ENCODE measurements at regions of chr7 and their contacts with region 1.

Region 1: DNA sequence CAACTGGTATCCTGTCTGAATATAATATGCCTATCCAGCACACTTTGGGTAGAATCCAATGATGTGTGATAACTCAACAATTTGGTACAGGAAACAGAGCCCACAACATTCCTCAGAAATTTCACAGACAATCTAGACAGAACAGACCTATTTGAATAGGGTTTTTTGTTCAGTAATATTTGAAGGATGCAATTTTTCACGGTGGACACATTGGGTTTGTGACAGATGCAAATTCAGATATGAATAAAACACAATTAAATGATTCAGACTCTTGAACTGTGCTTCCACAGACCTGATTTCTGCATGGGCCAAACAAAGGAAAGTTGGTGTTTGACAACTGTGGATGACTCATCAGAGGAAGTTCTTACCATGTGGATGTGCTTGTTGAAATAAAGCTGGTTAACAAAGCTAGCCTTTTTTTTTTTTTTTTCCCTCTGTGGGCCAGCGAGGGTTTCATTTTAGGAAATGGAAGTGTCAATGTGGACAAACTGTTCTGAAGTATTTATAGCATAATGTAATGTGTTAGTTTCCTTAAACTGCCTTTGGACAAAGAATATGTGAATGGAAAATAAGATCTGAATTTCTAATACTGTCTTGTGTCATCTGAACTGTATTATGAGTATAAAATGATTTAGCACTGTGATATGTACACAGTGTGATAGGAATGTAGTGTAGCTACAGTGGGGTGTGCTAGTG is 43.2 kb upstream of the FAM133B start:
- DNase-seq: peak in 6 of 7 donors; percentile 39 to 70 (median 58)
- H3K4me3 ChIP-seq: no peak overlapping the region
- H3K27ac ChIP-seq: peak overlapping the region in 4 of 5 donors; percentile 25 to 78 (median 58)
- H3K4me1 ChIP-seq: peaks cover 11 to 46% of the 10 kb centered on the region in 2 donors
- H3K27me3 ChIP-seq: no peaks in the 10 kb centered on the region
- CTCF ChIP-seq: peak in 1 of 6 experiments; percentile 12
- POLR2A ChIP-seq: no peak

Region 2: DNA sequence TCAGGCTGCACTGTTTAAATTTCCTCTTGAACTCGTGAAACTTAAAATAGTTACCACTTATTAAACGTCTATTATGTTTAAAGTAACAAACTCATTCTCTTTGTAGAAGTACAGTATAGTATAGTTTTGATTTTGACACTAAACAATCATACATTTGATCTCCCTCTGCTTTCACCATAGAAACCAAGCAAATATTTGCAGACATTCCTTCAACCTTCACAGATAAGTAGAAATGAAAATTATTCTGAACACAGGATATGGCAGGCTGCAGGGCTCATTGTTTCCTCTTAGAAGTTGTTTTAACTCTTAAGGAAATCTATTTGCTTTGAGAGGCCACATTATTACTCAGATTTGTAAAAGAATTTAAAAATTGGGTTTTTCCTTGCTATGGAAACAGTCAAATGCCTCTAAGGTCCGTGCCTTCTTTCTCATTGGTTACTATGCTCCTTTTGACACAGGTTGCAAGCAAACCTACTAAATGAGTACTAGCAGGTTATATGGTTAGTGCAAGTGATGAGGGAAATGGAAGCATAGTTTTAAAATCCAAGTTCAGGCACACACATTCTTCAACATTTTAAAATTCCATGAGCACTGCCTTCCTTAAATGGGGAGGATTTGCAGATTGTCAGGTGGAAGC is 49.7 kb after region 1 on chr7:
- intact Hi-C with region 1: loop called in 1 of 2 experiments (anchors 10 kb)
- DNase-seq: no peak
- H3K4me3 ChIP-seq: no peak overlapping the region
- H3K27ac ChIP-seq: peak overlapping the region in 1 of 5 donors; percentile 0
- H3K4me1 ChIP-seq: peaks cover 11 to 22% of the 10 kb centered on the region in 2 donors
- H3K27me3 ChIP-seq: no peaks in the 10 kb centered on the region
- CTCF ChIP-seq: no peak
- POLR2A ChIP-seq: no peak